ENCODE measurements at regions of chr3 and their contacts with region 1.

Region 1: DNA sequence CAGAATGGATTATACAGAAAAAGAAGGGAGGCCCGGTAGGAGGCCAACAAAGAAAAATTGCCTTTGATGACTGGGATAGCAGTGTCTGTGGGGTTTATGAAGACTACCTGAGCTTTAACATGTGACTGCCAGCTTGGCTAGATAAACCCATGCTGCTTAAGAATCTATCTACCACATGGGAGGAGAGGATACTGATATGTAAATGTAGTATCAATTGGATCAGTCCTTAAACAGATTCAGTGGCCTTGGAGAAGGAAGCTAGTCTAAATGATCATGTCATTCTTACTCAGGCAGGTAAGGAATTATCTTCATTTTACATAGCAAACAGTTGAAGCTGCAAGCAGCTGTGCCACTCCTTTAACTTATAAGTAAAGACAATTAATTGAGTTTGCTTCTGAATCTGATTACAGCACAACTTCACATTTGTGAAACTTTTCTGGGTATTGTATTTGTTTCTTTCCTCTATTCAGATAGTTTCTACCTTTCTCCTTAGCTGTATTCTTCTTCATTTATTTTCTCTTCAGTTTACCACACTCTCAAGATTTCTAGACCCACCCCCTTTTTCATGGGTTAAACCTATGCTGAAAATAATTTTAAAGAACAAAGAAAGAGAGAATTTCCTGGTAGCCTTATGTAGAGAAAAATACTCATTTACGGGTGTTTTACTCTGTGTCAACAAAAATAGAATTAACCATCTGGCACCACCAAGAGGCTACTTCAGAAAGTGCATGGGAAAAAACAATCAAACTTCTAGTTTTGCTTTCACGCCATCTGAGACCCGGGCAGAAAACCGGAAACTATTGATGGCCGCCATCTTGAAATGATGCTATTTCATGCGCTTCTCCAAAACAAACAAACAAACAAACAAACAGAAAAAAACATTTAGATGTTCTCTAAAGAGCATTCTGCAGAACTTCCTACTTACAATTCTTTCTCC is 49.8 kb upstream of the SYNPR start:
- H3K4me3 ChIP-seq: no peak overlapping the region
- H3K27ac ChIP-seq: no peak overlapping the region
- H3K4me1 ChIP-seq: no peaks in the 10 kb centered on the region
- CTCF ChIP-seq: no peak; the same call in 1 of the 2 replicates

Region 2: DNA sequence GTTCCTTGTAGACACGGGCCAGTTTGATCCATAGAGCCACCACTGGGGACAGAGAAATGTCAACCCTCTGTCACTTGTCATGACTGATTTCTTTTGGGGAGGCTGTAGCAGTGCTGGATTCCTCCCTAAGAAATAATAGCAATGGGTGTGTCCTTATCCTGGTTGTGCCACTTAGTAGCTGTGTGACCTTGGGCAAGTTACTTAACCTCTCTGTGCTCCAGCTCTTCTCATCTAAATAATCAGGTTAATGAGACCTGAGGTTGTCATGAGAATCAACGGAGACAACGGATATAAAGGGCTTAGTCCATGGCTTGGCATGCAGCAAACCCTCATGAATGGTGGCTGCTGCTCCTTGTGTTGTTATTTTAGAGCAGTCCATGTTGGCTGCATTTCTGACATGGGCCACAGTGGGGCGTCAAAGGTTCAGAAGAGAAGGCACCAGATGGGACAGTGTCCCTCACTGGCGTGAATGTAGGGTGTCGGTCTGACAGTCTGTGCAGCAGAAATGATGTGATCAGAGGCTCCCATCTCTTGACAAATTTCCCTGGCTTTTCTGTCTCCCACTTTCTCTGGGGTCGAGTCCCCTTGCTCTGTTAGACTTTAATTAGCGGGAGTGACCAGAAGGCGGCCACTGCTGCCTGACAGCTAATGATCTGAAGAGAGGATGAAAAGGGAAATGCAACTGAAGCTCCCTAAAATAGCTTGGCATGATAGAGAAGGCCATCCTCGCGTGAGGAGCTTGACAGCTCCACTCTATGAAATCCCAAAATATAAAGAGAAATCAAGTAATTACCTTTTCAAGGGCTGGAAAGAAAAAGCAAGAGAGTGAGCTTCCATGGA is 562.5 kb before region 1 on chr3:
- CTCF ChIA-PET with region 1: interaction called, 21 read pairs
- POLR2A ChIA-PET with region 1: no interaction called
- H3K4me3 ChIP-seq: no peak overlapping the region
- H3K27ac ChIP-seq: no peak overlapping the region
- H3K4me1 ChIP-seq: no peaks in the 10 kb centered on the region
- CTCF ChIP-seq: peak; percentile 87

Region 3: DNA sequence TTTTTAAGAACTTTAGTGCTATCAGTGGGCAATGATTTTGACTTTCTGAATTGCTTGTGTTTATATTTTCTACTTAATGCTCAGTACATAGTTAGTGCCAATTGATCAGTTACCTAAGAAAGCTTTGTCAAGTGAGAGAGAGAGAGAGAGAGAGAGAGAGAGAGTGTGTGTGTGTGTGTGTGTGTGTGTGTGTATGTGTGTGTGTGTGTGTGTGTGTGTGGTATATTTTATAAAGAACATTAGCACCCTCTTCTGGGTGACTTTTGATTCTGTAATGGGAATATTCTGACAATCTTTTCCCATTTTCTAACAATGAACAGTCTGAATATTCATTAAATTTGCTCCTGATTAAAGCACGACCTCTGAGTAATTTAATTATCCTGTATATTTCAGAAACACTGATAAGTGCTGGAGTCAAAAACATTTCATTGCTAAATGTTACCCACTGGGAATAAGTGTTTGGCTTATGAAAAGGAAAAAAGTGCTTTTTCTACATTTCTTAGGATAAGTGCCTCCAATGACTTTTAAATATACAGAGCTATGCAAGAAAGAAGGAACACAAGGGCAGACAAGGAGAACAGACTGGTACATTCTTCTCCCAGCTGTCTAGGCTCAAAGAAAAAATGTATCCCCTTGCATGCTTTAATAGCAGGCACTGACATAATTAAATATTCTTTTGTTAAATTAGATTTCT is 17.3 kb after region 1 on chr3:
- CTCF ChIA-PET with region 1: interaction called, 14 read pairs
- POLR2A ChIA-PET with region 1: no interaction called
- H3K4me3 ChIP-seq: no peak overlapping the region
- H3K27ac ChIP-seq: no peak overlapping the region
- H3K4me1 ChIP-seq: no peaks in the 10 kb centered on the region
- CTCF ChIP-seq: no peak

Measured in HEK293 (cell line).